ENCODE measurements at regions of chr10 and their contacts with region 1.

Region 1: DNA sequence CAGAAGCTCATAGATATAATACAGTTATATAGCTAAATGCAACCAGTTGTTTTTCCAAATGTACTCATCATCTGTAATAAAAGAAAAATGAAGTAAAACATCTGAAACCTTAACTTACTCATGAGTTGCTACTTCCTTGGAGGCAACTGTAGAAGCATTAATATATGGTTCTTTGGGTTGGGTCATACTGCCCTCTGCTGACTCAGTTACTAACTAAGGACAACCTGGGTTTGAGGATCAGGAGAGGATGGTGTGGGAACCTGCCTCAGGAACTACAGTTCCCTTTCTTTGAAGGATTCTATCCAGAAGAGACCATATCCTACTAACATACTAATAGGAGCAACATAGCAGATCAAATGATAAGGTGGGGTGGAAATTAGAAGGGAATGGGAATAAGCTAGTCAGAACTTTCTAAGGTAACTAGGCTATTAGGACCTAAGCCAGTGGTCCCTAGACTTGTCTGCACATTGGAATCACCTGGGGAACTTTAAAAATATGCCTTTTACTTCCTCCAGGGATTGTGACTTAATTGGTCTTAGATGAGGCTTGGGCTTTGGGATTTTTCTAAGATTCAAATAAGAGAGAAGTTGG is 20.7 kb downstream of the COX15 start:
- DNase-seq: peak; percentile 15
- ATAC-seq: peak; percentile 85
- H3K4me3 ChIP-seq: no peak overlapping the region
- H3K27ac ChIP-seq: no peak overlapping the region
- H3K4me1 ChIP-seq: peaks cover 6% of the 10 kb centered on the region; the same call in 1 of the 2 replicates
- H3K27me3 ChIP-seq: no peaks in the 10 kb centered on the region
- CTCF ChIP-seq: peak; percentile 57 to 73 (median 60)
- EP300 ChIP-seq: no peak
- POLR2A ChIP-seq: no peak
- RAD21 ChIP-seq: peak; percentile 78

Region 2: GRCh38 chr10:99395750-99396445 is 315.3 kb before region 1 on chr10:
- CTCF ChIA-PET with region 1: no interaction called
- POLR2A ChIA-PET with region 1: no interaction called
- RAD21 ChIA-PET with region 1: no interaction called
- SMC1A ChIA-PET with region 1: no interaction called
- in situ Hi-C with region 1: no loop called
- intact Hi-C with region 1: loop called (anchors 1 kb)
- DNase-seq: no peak
- ATAC-seq: no peak
- H3K4me3 ChIP-seq: no peak overlapping the region
- H3K27ac ChIP-seq: no peak overlapping the region
- H3K4me1 ChIP-seq: no peaks in the 10 kb centered on the region
- H3K27me3 ChIP-seq: no peaks in the 10 kb centered on the region
- CTCF ChIP-seq: no peak
- EP300 ChIP-seq: no peak
- POLR2A ChIP-seq: no peak
- RAD21 ChIP-seq: no peak

Region 3: DNA sequence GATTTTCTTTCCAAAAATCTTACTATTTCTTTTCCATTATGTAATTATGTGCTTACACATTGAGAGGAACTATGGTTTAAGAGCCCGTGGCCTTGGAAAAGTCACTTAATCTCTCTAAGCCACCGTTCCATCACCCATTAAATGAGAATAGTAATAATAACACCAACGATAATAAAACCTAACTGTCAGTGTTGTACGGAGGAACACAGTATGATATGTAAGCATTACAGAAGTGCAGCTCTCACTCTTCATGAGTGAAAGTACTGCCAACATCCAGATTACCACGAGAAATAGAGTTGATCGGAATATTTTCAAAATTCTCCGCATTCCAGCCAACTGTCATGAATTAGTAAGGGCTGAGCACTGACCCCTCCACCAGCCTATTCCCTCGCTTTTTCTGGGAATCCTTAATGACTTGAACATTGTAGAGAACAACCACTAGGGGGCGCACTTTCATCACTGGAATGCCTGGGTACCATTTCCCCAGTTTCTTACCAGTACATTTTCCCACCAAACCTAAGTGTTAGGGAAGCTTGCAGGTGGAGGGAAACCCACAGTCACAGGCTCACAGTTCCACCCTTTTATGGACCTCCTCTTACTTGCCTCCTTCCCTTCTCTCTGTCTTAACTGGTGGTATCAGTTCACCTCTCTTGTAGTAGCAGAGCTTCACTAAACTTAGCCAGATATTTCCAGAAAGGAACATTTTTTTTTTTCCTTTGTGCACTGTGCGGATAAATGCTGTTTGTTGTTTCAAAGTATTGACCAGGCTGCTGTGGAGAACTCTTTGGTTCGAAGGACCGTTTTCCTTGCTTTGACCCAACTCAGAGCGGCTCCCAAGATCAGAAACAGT is 150.7 kb before region 1 on chr10:
- CTCF ChIA-PET with region 1: interaction called, 42 read pairs
- POLR2A ChIA-PET with region 1: no interaction called
- RAD21 ChIA-PET with region 1: interaction called, 4 read pairs
- SMC1A ChIA-PET with region 1: interaction called, 7 read pairs
- in situ Hi-C with region 1: no loop called
- intact Hi-C with region 1: loop called (anchors 2 kb)
- DNase-seq: no peak
- ATAC-seq: no peak
- H3K4me3 ChIP-seq: no peak overlapping the region
- H3K27ac ChIP-seq: no peak overlapping the region
- H3K4me1 ChIP-seq: peaks cover 13% of the 10 kb centered on the region
- H3K27me3 ChIP-seq: no peaks in the 10 kb centered on the region; a peak in 1 of 4 replicates
- CTCF ChIP-seq: peak; percentile 65 to 74 (median 67)
- EP300 ChIP-seq: no peak
- POLR2A ChIP-seq: no peak
- RAD21 ChIP-seq: peak; percentile 69

Region 4: DNA sequence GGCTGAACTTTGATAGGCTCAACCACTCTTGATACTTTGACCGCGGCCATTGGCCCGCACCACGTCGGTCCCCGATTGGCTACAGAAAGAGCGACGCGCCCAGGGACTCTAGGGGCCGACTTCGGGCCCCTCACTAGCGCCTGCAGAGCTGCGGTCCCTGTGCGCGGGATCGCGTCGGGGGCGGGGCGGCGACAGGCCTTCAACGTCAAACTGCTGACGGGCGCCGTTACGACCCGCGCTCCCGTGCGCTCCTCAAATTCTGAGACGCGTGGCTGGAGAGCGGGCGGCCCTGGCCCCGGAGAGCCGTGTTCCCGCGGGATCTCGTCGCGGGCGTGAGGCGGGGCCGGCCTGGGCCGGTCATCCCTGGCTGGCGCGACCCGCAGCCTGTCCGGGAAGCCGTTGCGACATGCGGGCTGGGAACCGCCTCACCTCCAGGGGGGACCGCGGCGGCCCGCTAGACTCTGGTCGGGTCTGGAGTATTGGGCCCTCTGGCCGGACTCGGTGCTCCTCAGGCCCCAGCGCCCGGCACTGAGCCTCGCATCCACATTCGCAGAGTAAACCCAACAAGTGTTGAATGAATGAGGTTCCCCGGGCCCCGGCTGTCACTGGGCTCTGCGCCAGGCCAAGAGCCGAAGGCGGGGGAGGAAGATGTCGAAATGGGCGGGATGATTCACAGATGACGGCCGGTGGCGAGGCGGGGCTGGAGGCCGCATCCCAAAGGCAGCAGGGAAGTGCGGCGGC is 90.3 kb before region 1 on chr10:
- CTCF ChIA-PET with region 1: interaction called, 59 read pairs
- POLR2A ChIA-PET with region 1: no interaction called
- RAD21 ChIA-PET with region 1: interaction called, 10 read pairs
- SMC1A ChIA-PET with region 1: interaction called, 25 read pairs
- in situ Hi-C with region 1: loop called (anchors 5 kb)
- intact Hi-C with region 1: loop called (anchors 2 kb)
- DNase-seq: peak; percentile 26
- ATAC-seq: peak; percentile 95
- H3K4me3 ChIP-seq: peak overlapping the region; percentile 78
- H3K27ac ChIP-seq: peak overlapping the region; percentile 89
- H3K4me1 ChIP-seq: peaks cover 8% of the 10 kb centered on the region; the same call in 1 of the 2 replicates
- H3K27me3 ChIP-seq: no peaks in the 10 kb centered on the region
- CTCF ChIP-seq: no peak
- EP300 ChIP-seq: no peak; a peak in 1 of 4 replicates
- POLR2A ChIP-seq: peak; percentile 89
- RAD21 ChIP-seq: no peak

Region 5: GRCh38 chr10:99732033-99732912 is 21.0 kb after region 1 on chr10 and contains the starts of genes COX15 and CUTC:
- CTCF ChIA-PET with region 1: interaction called, 17 read pairs
- POLR2A ChIA-PET with region 1: interaction called, 4 read pairs
- RAD21 ChIA-PET with region 1: interaction called, 3 read pairs
- SMC1A ChIA-PET with region 1: no interaction called
- in situ Hi-C with region 1: no loop called
- intact Hi-C with region 1: no loop called
- DNase-seq: peak; percentile 82
- ATAC-seq: peak; percentile 95
- H3K4me3 ChIP-seq: peak within 1 kb of the TSS; percentile 98
- H3K27ac ChIP-seq: peak within 1 kb of the TSS; percentile 89
- H3K4me1 ChIP-seq: peaks cover 5% of the 10 kb centered on the region; the same call in 1 of the 2 replicates
- H3K27me3 ChIP-seq: no peaks in the 10 kb centered on the region
- CTCF ChIP-seq: peak; percentile 25 to 57 (median 48); a peak in 5 of 6 replicates
- EP300 ChIP-seq: no peak
- POLR2A ChIP-seq: peak; percentile 94
- RAD21 ChIP-seq: 0 out of 2 replicates have a peak, but pooled peaks have one; percentile 1
- polyA plus RNA-seq, gene COX15: 46.3 to 50.7 TPM
- polyA plus RNA-seq, gene CUTC: 64.6 to 71.7 TPM

Measured in GM12878 (cell line).